ENCODE measurements at regions of chr9 and their contacts with region 1.

Region 1: GRCh38 chr9:7186175-7186574 is 428.4 kb downstream of the KDM4C start:
- DNase-seq: peak; percentile 16
- ATAC-seq: peak; percentile 60
- H3K4me3 ChIP-seq: no peak overlapping the region
- H3K27ac ChIP-seq: no peak overlapping the region
- H3K4me1 ChIP-seq: no peaks in the 10 kb centered on the region
- H3K27me3 ChIP-seq: no peaks in the 10 kb centered on the region
- CTCF ChIP-seq: peak; percentile 81
- EP300 ChIP-seq: no peak
- POLR2A ChIP-seq: no peak
- RAD21 ChIP-seq: no peak

Region 2: DNA sequence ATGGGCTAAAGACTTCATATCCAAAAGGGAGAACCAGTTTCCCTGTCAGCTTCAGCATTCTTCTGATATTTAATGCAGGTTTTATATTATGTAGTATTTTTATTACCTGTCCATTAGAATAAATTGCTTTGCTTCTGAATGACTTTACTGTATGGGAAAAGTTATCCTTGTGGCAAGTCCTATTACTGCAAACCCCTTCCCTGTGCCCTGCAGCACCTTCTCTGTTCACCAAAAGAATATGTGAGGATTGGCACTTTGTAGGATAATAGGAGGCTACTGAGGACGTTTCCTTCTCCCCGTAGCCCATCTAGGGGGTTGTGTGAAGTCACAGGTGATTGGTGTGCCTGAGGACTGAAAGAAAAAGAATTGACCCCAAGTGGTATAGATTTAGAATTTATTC is 132.3 kb before region 1 on chr9:
- CTCF ChIA-PET with region 1: interaction called, 6 read pairs
- POLR2A ChIA-PET with region 1: no interaction called
- in situ Hi-C with region 1: no loop called
- intact Hi-C with region 1: loop called (anchors 1 kb)
- DNase-seq: no peak
- ATAC-seq: no peak
- H3K4me3 ChIP-seq: no peak overlapping the region
- H3K27ac ChIP-seq: no peak overlapping the region
- H3K4me1 ChIP-seq: no peaks in the 10 kb centered on the region
- H3K27me3 ChIP-seq: no peaks in the 10 kb centered on the region
- CTCF ChIP-seq: no peak
- EP300 ChIP-seq: no peak
- POLR2A ChIP-seq: no peak
- RAD21 ChIP-seq: no peak

Measured in HepG2 (cell line).